Naive thymus-derived CD4-positive, alpha-beta T cell (primary cell): ENCODE measurements at regions of chr1 and their contacts with region 1.

Region 1: DNA sequence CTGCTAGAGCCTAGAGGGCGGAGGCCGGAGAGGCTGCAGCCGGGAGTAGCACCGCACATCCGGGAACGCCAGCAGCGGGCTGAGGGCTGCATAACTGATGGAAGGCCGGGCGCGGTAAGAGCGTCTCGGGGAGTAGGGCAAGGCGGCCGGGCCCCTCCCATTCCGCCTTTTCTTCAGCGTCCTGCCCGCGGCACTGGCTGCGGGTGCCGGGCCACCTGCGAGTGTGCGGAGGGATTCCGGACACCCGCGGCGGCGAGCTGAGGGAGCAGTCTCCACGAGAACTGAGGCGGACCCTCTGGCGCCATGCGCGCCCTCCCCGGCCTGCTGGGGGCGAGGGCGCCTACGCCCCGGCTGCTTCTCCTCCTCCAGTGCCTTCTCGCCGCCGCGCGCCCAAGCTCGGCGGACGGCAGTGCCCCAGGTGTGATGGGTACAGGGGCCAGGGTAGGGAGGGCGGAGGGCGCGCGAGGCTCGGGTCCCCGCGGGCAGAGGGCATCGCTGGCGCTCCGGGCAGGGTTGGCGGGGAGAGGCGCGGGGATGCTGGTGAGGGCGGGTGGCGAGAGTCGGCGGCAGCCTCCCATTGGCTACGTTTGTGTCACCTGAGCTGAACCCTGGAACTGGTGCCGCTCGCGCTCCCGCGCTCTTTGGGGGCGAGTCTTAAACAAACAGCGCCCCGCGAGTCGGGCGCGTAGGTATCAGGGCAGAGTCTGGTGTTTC is 334.4 kb downstream of the SRGAP2C start:
- DNase-seq: peak; percentile 62 to 86 (median 83)
- ATAC-seq: peak; percentile 93
- H3K4me3 ChIP-seq: peak overlapping the region; percentile 86
- H3K4me3 Mint-ChIP-seq: peak overlapping the region; percentile 70 to 97 (median 91)
- H3K27ac ChIP-seq: peak overlapping the region; percentile 76
- H3K27ac Mint-ChIP-seq: peak overlapping the region; percentile 68 to 96 (median 90)
- H3K4me1 ChIP-seq: peaks cover 30 to 36% of the 10 kb centered on the region in 2 donors
- H3K4me1 Mint-ChIP-seq: peaks cover 40 to 74% (median 65%) of the 10 kb centered on the region in 7 donors
- H3K27me3 ChIP-seq: no peaks in the 10 kb centered on the region
- H3K27me3 Mint-ChIP-seq: no peaks in the 10 kb centered on the region

Region 2: DNA sequence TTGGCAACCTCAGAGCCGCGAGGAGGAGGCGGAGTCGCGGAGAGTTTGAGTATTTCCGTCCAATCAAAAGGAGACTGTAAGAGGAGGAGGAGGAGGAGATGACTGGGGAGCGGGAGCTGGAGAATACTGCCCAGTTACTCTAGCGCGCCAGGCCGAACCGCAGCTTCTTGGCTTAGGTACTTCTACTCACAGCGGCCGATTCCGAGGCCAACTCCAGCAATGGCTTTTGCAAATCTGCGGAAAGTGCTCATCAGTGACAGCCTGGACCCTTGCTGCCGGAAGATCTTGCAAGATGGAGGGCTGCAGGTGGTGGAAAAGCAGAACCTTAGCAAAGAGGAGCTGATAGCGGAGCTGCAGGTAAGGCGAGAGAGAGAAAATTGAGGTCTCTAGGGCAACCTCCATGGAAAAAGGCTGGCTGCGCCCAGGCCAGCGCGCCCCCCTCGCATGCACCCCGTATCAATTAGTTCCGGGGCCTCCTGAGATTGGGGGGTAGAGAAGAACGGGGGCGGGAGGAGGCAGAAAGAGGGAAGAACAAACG is 1807.3 kb before region 1 on chr1 and contains the start of gene PHGDH:
- CTCF ChIA-PET with region 1: no interaction called
- POLR2A ChIA-PET with region 1: no interaction called
- intact Hi-C with region 1: loop called in 1 of 2 experiments (anchors 10 kb)
- DNase-seq: peak in 8 of 9 donors; percentile 12 to 54 (median 37)
- ATAC-seq: peak; percentile 83
- H3K4me3 ChIP-seq: peak within 1 kb of the TSS; percentile 84
- H3K4me3 Mint-ChIP-seq: peak within 1 kb of the TSS; percentile 90 to 97 (median 93)
- H3K27ac ChIP-seq: no peak within 1 kb of the TSS
- H3K27ac Mint-ChIP-seq: peak within 1 kb of the TSS; percentile 1 to 89 (median 36)
- H3K4me1 ChIP-seq: no peaks in the 10 kb centered on the region
- H3K4me1 Mint-ChIP-seq: peaks cover 15 to 43% (median 26%) of the 10 kb centered on the region in 7 donors
- H3K27me3 ChIP-seq: no peaks in the 10 kb centered on the region
- H3K27me3 Mint-ChIP-seq: peaks cover 0 to 39% (median 15%) of the 10 kb centered on the region in 5 donors
- total RNA-seq, gene PHGDH: 6.9 to 79.5 (median 13.3) TPM

Region 3: DNA sequence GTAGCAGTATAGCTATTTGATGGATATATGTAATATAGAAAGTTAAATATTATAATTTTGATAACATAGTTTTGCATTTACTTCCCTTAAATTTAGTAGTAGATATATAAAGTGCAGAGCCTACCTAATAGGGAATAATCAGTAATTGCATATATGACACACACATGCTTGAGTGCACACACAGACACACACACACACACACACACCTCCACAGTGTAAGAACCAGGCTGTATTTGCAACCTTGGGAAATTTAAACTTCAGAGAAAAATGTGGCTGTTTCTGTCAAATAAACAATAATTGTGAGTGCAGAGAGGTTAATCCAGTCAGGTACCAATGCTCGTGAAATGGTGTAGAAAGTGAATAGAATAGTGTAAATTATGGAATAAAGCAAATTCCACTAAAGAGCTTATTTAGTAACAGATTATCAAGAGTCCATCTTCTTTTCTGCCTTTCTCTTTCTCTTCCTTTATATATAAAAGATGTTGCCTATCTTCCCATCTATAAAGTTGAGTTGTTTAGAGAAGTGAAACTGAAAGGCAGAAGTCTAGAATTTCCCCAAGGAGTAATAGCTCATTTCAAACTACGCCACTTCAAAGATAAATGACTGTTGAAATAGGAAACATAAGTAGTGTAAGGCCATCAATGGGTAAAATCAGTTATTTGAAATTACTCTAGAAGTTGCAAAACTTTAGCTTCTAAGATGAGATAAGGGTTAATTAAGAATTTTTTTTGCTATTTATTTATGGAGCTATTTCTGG is 60.7 kb before region 1 on chr1:
- CTCF ChIA-PET with region 1: no interaction called
- POLR2A ChIA-PET with region 1: interaction called, 4 read pairs
- intact Hi-C with region 1: loop called in 1 of 2 experiments (anchors 1 kb)
- DNase-seq: peak in 5 of 9 donors; percentile 2 to 33 (median 9)
- ATAC-seq: peak; percentile 87
- H3K4me3 ChIP-seq: peak overlapping the region; percentile 55
- H3K4me3 Mint-ChIP-seq: peak overlapping the region; percentile 58 to 89 (median 81)
- H3K27ac ChIP-seq: peak overlapping the region; percentile 35
- H3K27ac Mint-ChIP-seq: peak overlapping the region; percentile 70 to 89 (median 82)
- H3K4me1 ChIP-seq: no peaks in the 10 kb centered on the region
- H3K4me1 Mint-ChIP-seq: peaks cover 0 to 26% (median 11%) of the 10 kb centered on the region in 7 donors
- H3K27me3 ChIP-seq: no peaks in the 10 kb centered on the region
- H3K27me3 Mint-ChIP-seq: peaks cover 0 to 7% (median 0%) of the 10 kb centered on the region in 5 donors

Region 4: DNA sequence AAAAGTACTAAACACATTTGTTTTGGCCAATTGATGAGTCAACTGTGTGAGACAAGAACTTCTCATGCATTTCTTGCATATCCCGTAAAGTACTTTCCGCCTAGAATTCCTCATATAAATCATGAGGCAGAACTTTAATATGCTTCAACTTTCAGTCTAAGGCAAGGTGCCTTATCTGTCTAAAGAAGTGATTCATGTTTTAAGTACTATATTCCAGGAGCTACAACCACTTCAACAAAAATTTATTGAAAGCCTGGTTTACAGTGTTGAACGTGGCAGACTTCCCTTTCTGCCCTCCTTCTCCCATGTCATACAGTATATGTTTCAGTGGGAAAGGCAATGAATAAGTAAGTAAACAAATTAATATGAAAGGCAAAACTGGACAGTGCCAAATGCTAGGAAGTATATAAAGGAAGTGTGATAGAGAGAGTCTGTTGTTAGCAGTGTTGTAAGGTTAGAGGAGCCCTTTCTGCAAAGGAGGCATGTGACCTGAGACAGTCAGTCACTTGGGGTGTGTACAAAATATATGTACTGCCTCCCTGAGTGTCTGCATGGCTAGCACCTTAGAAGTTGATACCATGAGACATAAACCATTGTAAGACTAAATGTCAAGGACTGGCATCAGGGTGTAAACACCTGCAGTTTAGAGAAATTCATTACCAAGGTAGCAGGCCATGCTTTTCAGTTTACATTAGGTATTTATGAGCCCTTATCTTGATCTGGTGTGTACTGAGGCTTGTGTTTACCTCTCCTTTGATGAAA is 27.8 kb after region 1 on chr1:
- CTCF ChIA-PET with region 1: interaction called, 6 read pairs
- POLR2A ChIA-PET with region 1: interaction called, 25 read pairs
- intact Hi-C with region 1: loop called (anchors 1 to 2 kb)
- DNase-seq: no peak
- ATAC-seq: peak; percentile 45
- H3K4me3 ChIP-seq: no peak overlapping the region
- H3K4me3 Mint-ChIP-seq: peak overlapping the region in 1 of 10 donors; percentile 23
- H3K27ac ChIP-seq: no peak overlapping the region
- H3K27ac Mint-ChIP-seq: peak overlapping the region in 5 of 9 donors; percentile 0 to 27 (median 19)
- H3K4me1 ChIP-seq: peaks cover 9 to 20% of the 10 kb centered on the region in 2 donors
- H3K4me1 Mint-ChIP-seq: peaks cover 22 to 54% (median 49%) of the 10 kb centered on the region in 7 donors
- H3K27me3 ChIP-seq: no peaks in the 10 kb centered on the region
- H3K27me3 Mint-ChIP-seq: no peaks in the 10 kb centered on the region

Region 5: GRCh38 chr1:121586369-121587229 is 67.4 kb after region 1 on chr1:
- CTCF ChIA-PET with region 1: no interaction called
- POLR2A ChIA-PET with region 1: interaction called, 13 read pairs
- intact Hi-C with region 1: loop called in 1 of 2 experiments (anchors 10 kb)
- DNase-seq: peak in 6 of 9 donors; percentile 16 to 42 (median 30)
- ATAC-seq: no peak
- H3K4me3 ChIP-seq: no peak overlapping the region
- H3K4me3 Mint-ChIP-seq: peak overlapping the region; percentile 48 to 77 (median 64)
- H3K27ac ChIP-seq: no peak overlapping the region
- H3K27ac Mint-ChIP-seq: peak overlapping the region; percentile 11 to 90 (median 76)
- H3K4me1 ChIP-seq: peaks cover 14 to 22% of the 10 kb centered on the region in 2 donors
- H3K4me1 Mint-ChIP-seq: peaks cover 7 to 60% (median 34%) of the 10 kb centered on the region in 7 donors
- H3K27me3 ChIP-seq: no peaks in the 10 kb centered on the region
- H3K27me3 Mint-ChIP-seq: no peaks in the 10 kb centered on the region